HEK293 (cell line): ENCODE measurements at regions of chr12 and their contacts with region 1.

Region 1: GRCh38 chr12:5428332-5429221 is 3.3 kb upstream of the NTF3 start:
- H3K4me3 ChIP-seq: no peak overlapping the region
- H3K27ac ChIP-seq: no peak overlapping the region; the same call in 1 of the 2 replicates
- H3K4me1 ChIP-seq: peaks cover 24% of the 10 kb centered on the region
- CTCF ChIP-seq: peak; percentile 57

Region 2: GRCh38 chr12:5171701-5172100 is 256.9 kb before region 1 on chr12:
- CTCF ChIA-PET with region 1: interaction called, 11 read pairs
- POLR2A ChIA-PET with region 1: no interaction called
- H3K4me3 ChIP-seq: no peak overlapping the region
- H3K27ac ChIP-seq: no peak overlapping the region
- H3K4me1 ChIP-seq: no peaks in the 10 kb centered on the region
- CTCF ChIP-seq: peak; percentile 45; the same call in 1 of the 2 replicates

Region 3: GRCh38 chr12:5407034-5407856 is 21.3 kb before region 1 on chr12:
- CTCF ChIA-PET with region 1: interaction called, 11 read pairs
- POLR2A ChIA-PET with region 1: no interaction called
- H3K4me3 ChIP-seq: no peak overlapping the region
- H3K27ac ChIP-seq: no peak overlapping the region
- H3K4me1 ChIP-seq: peaks cover 4% of the 10 kb centered on the region; the same call in 1 of the 2 replicates
- CTCF ChIP-seq: no peak

Region 4: DNA sequence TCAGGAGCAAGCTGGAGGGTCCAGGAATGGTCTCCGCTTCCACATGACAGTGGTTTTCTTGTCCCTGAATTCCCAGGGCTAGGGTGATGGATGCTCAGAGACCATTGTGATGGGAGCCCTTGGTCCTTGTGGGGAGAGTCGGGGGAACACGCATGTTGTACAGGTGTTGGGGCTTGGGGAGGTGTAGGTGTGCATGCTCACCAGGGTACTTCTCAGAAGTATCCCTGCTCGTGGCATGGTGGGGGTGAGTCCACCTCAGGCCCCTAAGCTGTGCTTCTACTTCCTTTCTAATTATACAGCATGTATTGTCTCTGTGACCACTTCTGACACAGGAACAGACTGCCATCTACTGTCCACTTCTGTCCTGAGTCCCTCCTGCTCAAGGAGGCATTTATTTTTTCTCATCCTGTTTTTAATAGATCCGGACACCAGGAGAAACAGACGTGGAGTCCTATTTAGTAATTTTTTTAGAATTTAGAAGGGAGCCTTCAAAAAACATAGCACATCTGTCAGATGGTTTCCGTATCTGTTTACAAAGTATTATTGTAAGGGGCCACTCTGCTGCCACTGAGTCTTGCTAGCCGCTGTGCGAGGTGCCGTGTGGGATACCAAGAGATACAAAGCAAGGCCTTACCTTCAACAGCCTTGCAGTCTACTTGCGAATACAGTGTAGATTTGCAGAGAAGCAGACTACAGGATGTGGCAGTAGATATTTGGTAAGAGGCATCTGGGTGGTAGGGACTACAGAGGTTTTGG is 13.9 kb after region 1 on chr12:
- CTCF ChIA-PET with region 1: interaction called, 90 read pairs
- POLR2A ChIA-PET with region 1: interaction called, 20 read pairs
- H3K4me3 ChIP-seq: no peak overlapping the region
- H3K27ac ChIP-seq: no peak overlapping the region
- H3K4me1 ChIP-seq: no peaks in the 10 kb centered on the region
- CTCF ChIP-seq: peak; percentile 54

Region 5: DNA sequence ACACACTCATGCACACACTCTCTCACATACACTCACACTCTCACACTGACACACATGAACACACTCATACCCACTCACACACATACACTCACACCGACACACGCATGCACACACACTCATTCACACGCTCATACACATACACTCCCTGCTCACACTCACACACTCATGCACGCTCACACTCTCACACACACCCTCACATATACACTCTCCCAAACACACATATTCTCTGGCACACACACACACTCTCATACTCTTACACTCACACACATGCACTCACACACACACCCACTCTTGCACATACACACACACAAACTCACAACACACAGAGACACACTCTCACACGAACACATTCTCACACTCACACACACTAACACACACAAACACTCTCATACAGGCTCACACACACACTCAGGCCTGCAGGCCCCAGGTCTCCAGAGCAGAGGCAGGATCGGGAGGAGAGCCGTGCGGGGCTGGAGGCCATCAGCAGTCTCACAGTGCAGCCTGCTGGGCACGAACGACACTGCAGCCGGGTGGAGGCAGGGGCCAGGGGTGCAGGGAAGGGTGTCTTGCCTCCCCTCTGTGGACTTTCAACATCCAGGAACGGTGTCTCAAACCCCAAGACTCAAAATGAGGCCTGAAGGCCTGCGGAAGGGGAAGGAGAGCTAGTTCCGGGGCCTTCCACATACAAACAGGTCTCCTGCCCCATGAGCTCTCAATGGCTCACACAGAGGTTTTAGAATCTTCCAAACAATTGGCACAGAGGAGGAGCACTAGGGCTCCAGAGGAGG is 367.8 kb after region 1 on chr12:
- CTCF ChIA-PET with region 1: interaction called, 35 read pairs
- POLR2A ChIA-PET with region 1: no interaction called
- H3K4me3 ChIP-seq: no peak overlapping the region
- H3K27ac ChIP-seq: no peak overlapping the region
- H3K4me1 ChIP-seq: no peaks in the 10 kb centered on the region
- CTCF ChIP-seq: peak; percentile 84